Activated naive CD8-positive, alpha-beta T cell treated with anti-CD3 and anti-CD28 coated beads, Interleukin-2, amount 10 ng/mL, durations not matched to agents 7 days and 5 days (primary cell): ENCODE measurements at regions of chr12 and their contacts with region 1.

Region 1: DNA sequence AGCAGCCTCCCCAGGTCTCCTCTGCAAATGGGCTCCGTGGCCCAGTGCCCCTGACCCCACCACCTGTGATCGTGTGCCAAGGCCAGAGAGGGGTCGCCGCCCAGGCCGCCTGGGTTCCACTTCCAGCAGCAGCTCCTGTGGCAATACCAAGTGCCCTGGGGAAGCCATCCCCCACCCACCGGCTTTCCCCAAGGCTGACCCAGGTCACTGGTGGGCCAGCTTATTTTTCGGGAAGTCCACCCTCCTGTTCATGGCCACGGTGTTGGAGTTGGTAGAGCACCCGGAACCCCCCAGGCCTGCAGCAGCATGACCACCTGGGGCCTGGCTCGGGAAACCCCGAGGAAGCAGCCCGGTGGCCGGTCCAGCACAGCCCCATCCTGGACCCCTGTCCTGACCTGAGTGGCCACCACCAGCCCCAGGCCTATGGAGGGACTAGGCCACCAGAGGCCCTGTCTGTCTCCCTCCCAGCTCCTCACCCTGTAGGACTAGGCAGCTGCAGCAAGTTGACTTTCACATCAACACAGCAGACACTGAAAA is 40.8 kb upstream of the OASL start:
- DNase-seq: no peak
- ATAC-seq: no peak
- H3K4me3 Mint-ChIP-seq: no peak overlapping the region
- H3K27ac Mint-ChIP-seq: no peak overlapping the region
- H3K4me1 Mint-ChIP-seq: no peaks in the 10 kb centered on the region
- H3K27me3 Mint-ChIP-seq: peaks cover 16% of the 10 kb centered on the region

Region 2: GRCh38 chr12:120276734-120277133 is 803.1 kb before region 1 on chr12:
- POLR2A ChIA-PET with region 1: interaction called, 12 read pairs
- DNase-seq: no peak
- ATAC-seq: no peak
- H3K4me3 Mint-ChIP-seq: no peak overlapping the region
- H3K27ac Mint-ChIP-seq: no peak overlapping the region
- H3K4me1 Mint-ChIP-seq: no peaks in the 10 kb centered on the region
- H3K27me3 Mint-ChIP-seq: peaks cover 2% of the 10 kb centered on the region

Region 3: DNA sequence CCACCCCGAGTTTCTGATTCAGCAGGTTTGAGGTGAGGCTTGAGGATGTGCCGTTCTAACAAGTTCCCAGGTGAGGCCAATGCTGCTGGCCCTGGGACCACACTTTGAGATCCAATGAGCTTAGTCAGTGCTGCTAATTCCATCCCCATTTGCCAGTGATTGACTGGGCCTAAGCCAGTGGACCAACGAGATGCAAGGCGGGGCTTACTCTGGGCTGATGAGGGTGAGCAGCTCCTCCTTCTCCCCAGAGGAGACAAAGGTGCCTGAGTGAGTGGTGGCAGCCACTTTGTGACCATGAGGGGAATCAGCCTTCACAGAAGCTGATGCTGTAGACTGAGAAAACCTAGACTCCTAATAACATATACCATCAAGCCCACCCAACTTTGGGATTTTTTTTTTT is 124.6 kb before region 1 on chr12:
- POLR2A ChIA-PET with region 1: no interaction called
- DNase-seq: no peak
- ATAC-seq: no peak
- H3K4me3 Mint-ChIP-seq: no peak overlapping the region
- H3K27ac Mint-ChIP-seq: no peak overlapping the region
- H3K4me1 Mint-ChIP-seq: peaks cover 13% of the 10 kb centered on the region
- H3K27me3 Mint-ChIP-seq: peaks cover 8% of the 10 kb centered on the region

Region 4: GRCh38 chr12:121060149-121061001 is 19.4 kb before region 1 on chr12:
- POLR2A ChIA-PET with region 1: no interaction called
- DNase-seq: peak; percentile 66
- ATAC-seq: peak; percentile 96
- H3K4me3 Mint-ChIP-seq: peak overlapping the region; percentile 88
- H3K27ac Mint-ChIP-seq: peak overlapping the region; percentile 99
- H3K4me1 Mint-ChIP-seq: peaks cover 21% of the 10 kb centered on the region
- H3K27me3 Mint-ChIP-seq: peaks cover 3% of the 10 kb centered on the region

Region 5: GRCh38 chr12:121391619-121392324 is 312.0 kb after region 1 on chr12:
- POLR2A ChIA-PET with region 1: no interaction called
- DNase-seq: peak; percentile 36
- ATAC-seq: peak; percentile 77
- H3K4me3 Mint-ChIP-seq: peak overlapping the region; percentile 64
- H3K27ac Mint-ChIP-seq: peak overlapping the region; percentile 83
- H3K4me1 Mint-ChIP-seq: peaks cover 16% of the 10 kb centered on the region
- H3K27me3 Mint-ChIP-seq: no peaks in the 10 kb centered on the region